ENCODE measurements at regions of chr2 and their contacts with region 1.

Region 1: DNA sequence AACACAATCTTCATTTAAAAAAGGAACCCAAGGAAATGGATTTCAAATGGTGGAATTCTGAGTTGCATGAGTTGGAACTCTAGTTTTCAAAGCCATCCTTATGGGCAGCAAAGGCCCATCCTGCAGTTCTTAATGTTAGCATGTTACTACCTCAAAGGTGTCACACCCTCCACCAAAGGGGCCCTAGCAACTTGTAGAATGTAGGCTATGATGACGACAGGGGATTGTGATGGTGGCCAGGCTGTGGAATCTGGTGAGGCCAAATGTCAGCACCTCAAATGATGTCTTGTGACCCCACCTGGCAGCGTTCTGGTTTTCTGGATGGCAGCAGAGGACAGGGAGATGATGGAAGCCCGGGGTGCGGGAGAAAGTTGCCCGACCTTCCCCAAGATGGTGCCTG is at the start of gene TMEM247:
- DNase-seq: no peak
- total RNA-seq, gene TMEM247: not detected

Region 2: GRCh38 chr2:46493241-46493970 is 14.1 kb after region 1 on chr2:
- intact Hi-C with region 1: loop called in 1 of 2 experiments (anchors 2 kb)
- DNase-seq: no peak